Activated CD4-positive, alpha-beta T cell treated with anti-CD3 and anti-CD28 coated beads for 36 hours (primary cell): ENCODE measurements at regions of chr3 and their contacts with region 1.

Region 1: GRCh38 chr3:16511681-16512434 is 1.6 kb downstream of the RFTN1 start:
- DNase-seq: peak; percentile 92
- ATAC-seq: peak; percentile 72
- H3K4me3 Mint-ChIP-seq: peak overlapping the region; percentile 99
- H3K27ac Mint-ChIP-seq: peak overlapping the region; percentile 88
- H3K4me1 Mint-ChIP-seq: peaks cover 73% of the 10 kb centered on the region
- H3K27me3 Mint-ChIP-seq: no peaks in the 10 kb centered on the region

Region 2: GRCh38 chr3:15361494-15362212 is 1150.2 kb before region 1 on chr3:
- CTCF ChIA-PET with region 1: no interaction called
- POLR2A ChIA-PET with region 1: no interaction called
- intact Hi-C with region 1: loop called in 1 of 2 experiments (anchors 5 kb)
- DNase-seq: peak; percentile 83
- ATAC-seq: peak; percentile 76
- H3K4me3 Mint-ChIP-seq: peak overlapping the region; percentile 53
- H3K27ac Mint-ChIP-seq: peak overlapping the region; percentile 87
- H3K4me1 Mint-ChIP-seq: peaks cover 38% of the 10 kb centered on the region
- H3K27me3 Mint-ChIP-seq: peaks cover 2% of the 10 kb centered on the region

Region 3: DNA sequence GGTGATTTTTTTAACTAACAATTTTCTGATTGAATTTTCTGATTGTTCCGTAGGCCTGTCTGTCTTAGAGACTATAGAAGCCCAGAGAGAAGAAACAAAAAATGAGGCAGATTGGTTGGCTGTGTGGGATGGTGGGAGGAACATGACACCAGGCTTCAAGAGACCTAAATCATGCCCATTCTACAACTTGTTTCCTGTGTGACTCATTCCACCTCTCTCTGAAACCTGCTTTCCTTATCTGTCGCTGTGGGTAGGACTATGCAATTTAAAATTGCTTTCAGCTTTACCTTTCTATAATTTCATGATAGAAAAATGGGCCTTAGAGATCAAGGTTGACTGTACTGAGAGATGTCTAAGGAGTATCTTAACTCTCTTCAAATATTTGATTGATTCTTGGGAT is 202.3 kb before region 1 on chr3:
- CTCF ChIA-PET with region 1: interaction called, 8 read pairs
- POLR2A ChIA-PET with region 1: interaction called, 3 read pairs
- intact Hi-C with region 1: loop called (anchors 5 kb)
- DNase-seq: peak; percentile 69
- ATAC-seq: peak; percentile 78
- H3K4me3 Mint-ChIP-seq: peak overlapping the region; percentile 25
- H3K27ac Mint-ChIP-seq: peak overlapping the region; percentile 87
- H3K4me1 Mint-ChIP-seq: peaks cover 93% of the 10 kb centered on the region
- H3K27me3 Mint-ChIP-seq: no peaks in the 10 kb centered on the region

Region 4: GRCh38 chr3:16448639-16449070 is 63.2 kb before region 1 on chr3:
- CTCF ChIA-PET with region 1: no interaction called
- POLR2A ChIA-PET with region 1: no interaction called
- intact Hi-C with region 1: loop called in 1 of 2 experiments (anchors 2 kb)
- DNase-seq: peak; percentile 81
- ATAC-seq: peak; percentile 98
- H3K4me3 Mint-ChIP-seq: no peak overlapping the region
- H3K27ac Mint-ChIP-seq: peak overlapping the region; percentile 81
- H3K4me1 Mint-ChIP-seq: peaks cover 52% of the 10 kb centered on the region
- H3K27me3 Mint-ChIP-seq: no peaks in the 10 kb centered on the region

Region 5: DNA sequence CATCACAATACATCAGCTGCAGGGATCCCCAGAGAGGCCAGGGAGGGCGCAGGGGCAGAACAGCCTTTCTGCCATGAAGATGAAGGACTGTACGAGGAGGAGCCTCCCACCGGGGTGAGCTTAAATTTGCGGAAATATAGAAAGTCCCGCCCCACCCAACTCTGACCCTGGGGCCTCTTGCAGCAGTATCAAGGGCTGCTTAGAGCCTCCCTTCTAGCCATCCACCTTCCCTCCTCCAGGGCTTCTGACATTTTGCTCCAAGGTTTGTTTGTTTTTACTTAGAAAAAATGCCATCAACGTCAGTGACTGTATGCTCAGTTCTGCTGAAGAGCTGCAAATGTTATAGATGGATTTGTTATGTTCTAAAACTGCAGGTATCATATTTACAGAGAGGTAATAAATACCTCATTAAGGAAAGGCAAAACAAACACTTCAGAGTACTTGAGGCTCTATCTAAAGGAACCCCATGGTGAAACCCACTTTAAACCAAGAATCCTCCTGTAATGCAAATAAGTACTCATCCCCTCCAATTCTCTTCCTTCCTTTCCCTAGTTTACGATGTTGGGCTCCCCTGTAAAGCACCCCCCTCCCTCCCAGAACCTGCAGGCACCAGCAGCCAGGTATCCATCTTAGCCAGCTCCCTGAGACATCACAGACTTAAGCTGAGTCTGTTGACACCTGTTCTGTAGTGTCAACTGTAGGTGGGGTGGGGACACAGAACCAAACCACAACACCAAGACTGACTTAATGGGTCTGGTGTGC is 28.9 kb before region 1 on chr3:
- CTCF ChIA-PET with region 1: interaction called, 4 read pairs
- POLR2A ChIA-PET with region 1: interaction called, 5 read pairs
- intact Hi-C with region 1: loop called (anchors 1 to 2 kb)
- DNase-seq: peak; percentile 55
- ATAC-seq: peak; percentile 72
- H3K4me3 Mint-ChIP-seq: peak overlapping the region; percentile 34
- H3K27ac Mint-ChIP-seq: peak overlapping the region; percentile 91
- H3K4me1 Mint-ChIP-seq: peaks cover 75% of the 10 kb centered on the region
- H3K27me3 Mint-ChIP-seq: no peaks in the 10 kb centered on the region

Region 6: GRCh38 chr3:16606398-16606797 is 94.5 kb after region 1 on chr3:
- CTCF ChIA-PET with region 1: no interaction called
- POLR2A ChIA-PET with region 1: no interaction called
- intact Hi-C with region 1: no loop called
- DNase-seq: no peak
- ATAC-seq: no peak
- H3K4me3 Mint-ChIP-seq: no peak overlapping the region
- H3K27ac Mint-ChIP-seq: no peak overlapping the region
- H3K4me1 Mint-ChIP-seq: peaks cover 4% of the 10 kb centered on the region
- H3K27me3 Mint-ChIP-seq: peaks cover 3% of the 10 kb centered on the region